Activated CD4-positive, alpha-beta T cell treated with anti-CD3 and anti-CD28 coated beads for 36 hours (primary cell): ENCODE measurements at regions of chrX and their contacts with region 1.

Region 1: DNA sequence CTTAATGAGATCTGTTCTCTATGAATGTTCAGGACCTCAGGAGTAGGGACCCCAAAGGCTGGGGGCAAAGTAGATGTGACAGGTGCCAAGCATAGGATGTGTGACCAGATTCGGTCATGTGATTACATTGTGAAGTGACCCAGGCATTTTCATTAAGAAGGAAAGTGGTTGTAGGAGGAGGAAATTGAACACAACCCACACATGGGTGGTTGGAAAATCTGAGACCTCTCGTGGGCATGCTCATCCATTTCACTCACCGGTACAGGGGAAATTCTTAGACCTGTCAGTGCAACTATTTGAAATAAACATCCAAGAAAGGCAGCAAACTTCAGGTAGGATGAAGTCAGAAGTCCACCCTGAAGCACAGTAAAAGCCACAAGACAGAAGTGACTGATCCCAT is 43.5 kb upstream of the CD99 start:
- DNase-seq: peak; percentile 49
- ATAC-seq: peak; percentile 57
- H3K4me3 Mint-ChIP-seq: no peak overlapping the region
- H3K27ac Mint-ChIP-seq: peak overlapping the region; percentile 48
- H3K4me1 Mint-ChIP-seq: peaks cover 17% of the 10 kb centered on the region
- H3K27me3 Mint-ChIP-seq: no peaks in the 10 kb centered on the region

Region 2: DNA sequence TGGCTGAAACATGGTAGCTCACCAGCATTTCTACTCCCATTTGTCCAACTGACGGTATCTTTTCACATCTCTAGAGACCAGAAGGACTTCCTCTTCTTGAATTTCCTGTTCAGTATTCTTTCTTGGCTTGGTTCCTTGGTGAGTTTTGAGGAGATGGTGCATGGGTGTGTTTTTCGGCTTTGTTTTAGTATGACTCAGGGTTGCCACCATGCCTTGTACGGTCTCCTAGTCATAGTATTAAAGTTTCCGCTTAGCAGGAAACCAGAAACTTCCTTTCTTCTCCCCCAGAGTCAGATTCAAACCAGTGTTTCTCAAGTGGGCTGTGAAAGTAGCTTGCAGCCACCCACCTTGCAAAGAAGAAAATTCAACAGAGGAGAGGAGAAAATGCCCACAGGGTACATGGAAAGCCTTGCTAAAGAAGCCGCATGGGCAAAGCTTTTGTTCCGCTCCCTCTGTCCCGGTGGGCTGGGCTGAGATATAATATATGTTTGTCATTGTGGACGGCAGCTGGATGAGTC is 49.1 kb after region 1 on chrX:
- CTCF ChIA-PET with region 1: no interaction called
- POLR2A ChIA-PET with region 1: no interaction called
- intact Hi-C with region 1: loop called in 1 of 2 experiments (anchors 5 kb)
- DNase-seq: peak; percentile 72
- ATAC-seq: peak; percentile 81
- H3K4me3 Mint-ChIP-seq: peak overlapping the region; percentile 95
- H3K27ac Mint-ChIP-seq: peak overlapping the region; percentile 92
- H3K4me1 Mint-ChIP-seq: peaks cover 86% of the 10 kb centered on the region
- H3K27me3 Mint-ChIP-seq: no peaks in the 10 kb centered on the region

Region 3: GRCh38 chrX:2811271-2811670 is 163.6 kb after region 1 on chrX:
- CTCF ChIA-PET with region 1: no interaction called
- POLR2A ChIA-PET with region 1: no interaction called
- intact Hi-C with region 1: loop called (anchors 1 to 2 kb)
- DNase-seq: no peak
- ATAC-seq: no peak
- H3K4me3 Mint-ChIP-seq: no peak overlapping the region
- H3K27ac Mint-ChIP-seq: no peak overlapping the region
- H3K4me1 Mint-ChIP-seq: peaks cover 6% of the 10 kb centered on the region
- H3K27me3 Mint-ChIP-seq: peaks cover 4% of the 10 kb centered on the region